Left colon (tissue), 2 donors: ENCODE measurements at regions of chr13 and their contacts with region 1.

Region 1: GRCh38 chr13:101514788-101515187 is 62.3 kb downstream of the ITGBL1 start:
- DNase-seq: peak in 1 of 2 donors; percentile 11
- ATAC-seq: peak; percentile 57

Region 2: GRCh38 chr13:101655435-101655834 is 140.6 kb after region 1 on chr13:
- intact Hi-C with region 1: no loop called
- DNase-seq: no peak
- ATAC-seq: no peak

Region 3: GRCh38 chr13:101757446-101758039 is 242.8 kb after region 1 on chr13:
- intact Hi-C with region 1: loop called in 1 of 2 experiments (anchors 10 kb)
- DNase-seq: no peak
- ATAC-seq: peak; percentile 89

Region 4: GRCh38 chr13:102117175-102117828 is 602.5 kb after region 1 on chr13:
- intact Hi-C with region 1: no loop called
- DNase-seq: no peak
- ATAC-seq: no peak